Activated CD4-positive, alpha-beta memory T cell treated with anti-CD3 and anti-CD28 coated beads, Interleukin-2, amount 10 ng/mL, durations not matched to agents 7 days and 5 days (primary cell): ENCODE measurements at regions of chr15 and their contacts with region 1.

Region 1: GRCh38 chr15:50003786-50004334 is 115.2 kb downstream of the ATP8B4 start:
- DNase-seq: peak; percentile 85
- H3K4me3 Mint-ChIP-seq: no peak overlapping the region
- H3K27ac Mint-ChIP-seq: peak overlapping the region; percentile 67
- H3K4me1 Mint-ChIP-seq: peaks cover 17% of the 10 kb centered on the region
- H3K27me3 Mint-ChIP-seq: no peaks in the 10 kb centered on the region

Region 2: GRCh38 chr15:48861813-48862431 is 1141.9 kb before region 1 on chr15:
- CTCF ChIA-PET with region 1: interaction called, 11 read pairs
- POLR2A ChIA-PET with region 1: no interaction called
- DNase-seq: peak; percentile 33
- H3K4me3 Mint-ChIP-seq: no peak overlapping the region
- H3K27ac Mint-ChIP-seq: no peak overlapping the region
- H3K4me1 Mint-ChIP-seq: peaks cover 23% of the 10 kb centered on the region
- H3K27me3 Mint-ChIP-seq: peaks cover 7% of the 10 kb centered on the region

Region 3: DNA sequence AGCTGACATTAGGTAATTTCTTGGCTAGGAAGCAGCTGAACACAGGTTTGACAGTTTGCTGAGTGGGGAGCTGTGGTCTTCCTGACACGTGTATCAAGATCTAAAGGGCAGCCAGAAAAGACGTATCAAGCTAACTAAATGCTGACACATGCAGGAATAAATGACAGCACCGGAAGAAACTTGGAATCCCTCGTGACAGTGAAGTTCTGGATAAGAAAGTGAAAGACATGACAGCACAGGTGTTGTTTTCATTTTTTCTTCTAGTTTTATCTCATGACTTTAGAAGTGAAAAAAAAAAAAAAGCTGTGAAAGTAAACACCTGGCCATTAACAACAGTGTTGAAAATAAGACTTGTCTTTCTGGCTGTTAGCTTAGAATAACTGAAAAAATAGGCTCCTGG is 532.1 kb before region 1 on chr15:
- CTCF ChIA-PET with region 1: interaction called, 20 read pairs
- POLR2A ChIA-PET with region 1: no interaction called
- DNase-seq: no peak
- H3K4me3 Mint-ChIP-seq: no peak overlapping the region
- H3K27ac Mint-ChIP-seq: no peak overlapping the region
- H3K4me1 Mint-ChIP-seq: peaks cover 8% of the 10 kb centered on the region
- H3K27me3 Mint-ChIP-seq: peaks cover 9% of the 10 kb centered on the region

Region 4: GRCh38 chr15:49876401-49877038 is 127.3 kb before region 1 on chr15:
- CTCF ChIA-PET with region 1: interaction called, 14 read pairs
- POLR2A ChIA-PET with region 1: no interaction called
- DNase-seq: no peak
- H3K4me3 Mint-ChIP-seq: no peak overlapping the region
- H3K27ac Mint-ChIP-seq: no peak overlapping the region
- H3K4me1 Mint-ChIP-seq: no peaks in the 10 kb centered on the region
- H3K27me3 Mint-ChIP-seq: no peaks in the 10 kb centered on the region

Region 5: GRCh38 chr15:49934488-49934887 is 69.4 kb before region 1 on chr15:
- CTCF ChIA-PET with region 1: no interaction called
- POLR2A ChIA-PET with region 1: no interaction called
- DNase-seq: no peak
- H3K4me3 Mint-ChIP-seq: no peak overlapping the region
- H3K27ac Mint-ChIP-seq: no peak overlapping the region
- H3K4me1 Mint-ChIP-seq: peaks cover 3% of the 10 kb centered on the region
- H3K27me3 Mint-ChIP-seq: peaks cover 3% of the 10 kb centered on the region

Region 6: GRCh38 chr15:49990835-49991545 is 12.9 kb before region 1 on chr15:
- CTCF ChIA-PET with region 1: interaction called, 11 read pairs
- POLR2A ChIA-PET with region 1: interaction called, 5 read pairs
- DNase-seq: no peak
- H3K4me3 Mint-ChIP-seq: no peak overlapping the region
- H3K27ac Mint-ChIP-seq: no peak overlapping the region
- H3K4me1 Mint-ChIP-seq: peaks cover 6% of the 10 kb centered on the region
- H3K27me3 Mint-ChIP-seq: no peaks in the 10 kb centered on the region

Region 7: GRCh38 chr15:50077651-50078050 is 73.8 kb after region 1 on chr15:
- CTCF ChIA-PET with region 1: no interaction called
- POLR2A ChIA-PET with region 1: no interaction called
- DNase-seq: no peak
- H3K4me3 Mint-ChIP-seq: no peak overlapping the region
- H3K27ac Mint-ChIP-seq: no peak overlapping the region
- H3K4me1 Mint-ChIP-seq: no peaks in the 10 kb centered on the region
- H3K27me3 Mint-ChIP-seq: no peaks in the 10 kb centered on the region

Region 8: DNA sequence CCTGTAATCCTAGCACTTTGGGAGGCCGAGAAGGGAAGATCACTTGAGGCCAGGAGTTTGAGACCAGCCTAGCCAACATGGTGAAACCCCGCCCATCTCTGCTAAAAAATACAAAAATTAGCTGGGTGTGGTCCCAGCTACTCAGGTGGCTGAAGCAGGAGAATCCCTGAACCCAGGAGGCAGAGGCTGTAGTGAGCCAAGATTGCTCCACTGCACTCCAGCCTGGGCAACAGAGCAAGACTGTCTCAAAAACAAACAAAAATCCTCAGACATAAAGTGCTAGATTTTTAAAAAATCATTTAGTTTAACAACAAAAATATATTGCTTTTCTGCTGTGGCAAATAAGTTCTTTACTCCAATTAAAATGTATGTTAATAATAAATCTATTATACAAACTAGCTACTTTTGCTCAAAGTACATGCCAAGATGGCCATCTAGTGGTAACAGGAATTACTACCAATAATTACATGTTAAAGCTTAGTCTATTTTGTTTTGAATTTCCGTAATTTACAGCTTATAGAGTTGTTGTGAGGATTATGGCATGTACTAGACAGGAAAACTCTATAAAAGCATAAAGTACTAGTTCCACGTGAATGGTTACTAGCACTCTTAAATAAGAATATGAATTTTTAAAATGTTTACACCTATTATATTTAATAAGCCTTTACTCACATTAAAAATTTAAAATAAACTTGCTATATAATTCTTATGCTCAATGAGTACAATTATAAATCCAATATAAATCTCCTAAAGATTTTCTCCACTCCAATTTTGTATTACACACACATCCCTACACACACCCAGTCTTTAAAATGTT is 312.2 kb after region 1 on chr15:
- CTCF ChIA-PET with region 1: interaction called, 14 read pairs
- POLR2A ChIA-PET with region 1: no interaction called
- DNase-seq: no peak
- H3K4me3 Mint-ChIP-seq: no peak overlapping the region
- H3K27ac Mint-ChIP-seq: no peak overlapping the region
- H3K4me1 Mint-ChIP-seq: peaks cover 29% of the 10 kb centered on the region
- H3K27me3 Mint-ChIP-seq: no peaks in the 10 kb centered on the region